Caco-2 (cell line): ENCODE measurements at regions of chr20 and their contacts with region 1.

Region 1: GRCh38 chr20:45293041-45294002 is 13.3 kb upstream of the RBPJL start:
- DNase-seq: peak; percentile 90 to 95
- H3K4me3 ChIP-seq: peak overlapping the region; percentile 63
- H3K4me3 Mint-ChIP-seq: peak overlapping the region; percentile 72
- H3K27ac Mint-ChIP-seq: no peak overlapping the region
- H3K4me1 ChIP-seq: 0 out of 2 replicates have a peak, but pooled peaks cover 3% of the 10 kb centered on the region
- H3K4me1 Mint-ChIP-seq: no peaks in the 10 kb centered on the region
- H3K27me3 ChIP-seq: peaks cover 4% of the 10 kb centered on the region; the same call in 1 of the 2 replicates
- H3K27me3 Mint-ChIP-seq: peaks cover 13% of the 10 kb centered on the region
- CTCF ChIP-seq: peak; percentile 100

Region 2: DNA sequence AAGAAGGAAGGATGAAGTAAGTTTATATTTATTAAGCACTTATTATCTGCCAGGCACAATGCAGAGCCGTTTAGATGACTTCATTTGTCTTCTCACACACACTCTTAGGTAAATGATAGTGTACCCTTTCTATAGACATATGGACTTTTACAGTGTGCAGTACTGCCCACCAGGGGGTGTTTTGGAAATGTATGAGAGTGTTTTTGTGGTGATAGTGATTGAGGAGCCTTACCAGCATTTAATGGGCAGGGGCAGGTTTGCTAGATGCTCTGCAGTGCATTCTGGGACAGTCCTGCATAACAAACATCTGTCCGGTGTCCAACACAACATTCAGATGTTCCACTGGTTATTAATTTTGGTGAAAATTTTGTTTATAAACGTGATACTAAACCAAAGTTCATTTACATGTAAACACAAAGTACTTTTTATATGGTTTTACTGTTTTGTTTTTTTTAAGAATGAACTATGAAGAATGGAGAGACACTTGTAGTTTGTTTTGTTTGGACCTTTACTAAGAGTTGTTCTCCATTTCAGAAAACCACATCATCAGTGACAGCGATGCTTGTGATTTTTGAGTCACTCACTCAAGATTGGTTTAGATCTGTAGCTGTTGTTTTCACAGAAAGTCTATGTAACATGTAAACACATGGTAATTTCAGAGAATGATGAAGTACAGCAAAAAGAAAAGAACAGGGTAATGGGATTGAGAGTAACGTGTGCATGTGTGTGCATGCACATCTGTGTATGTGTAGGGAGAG is 212.3 kb before region 1 on chr20:
- CTCF ChIA-PET with region 1: interaction called, 3 read pairs
- POLR2A ChIA-PET with region 1: no interaction called
- intact Hi-C with region 1: loop called (anchors 5 kb)
- DNase-seq: peak in 1 of 2 experiments; percentile 67
- H3K4me3 ChIP-seq: no peak overlapping the region
- H3K4me3 Mint-ChIP-seq: no peak overlapping the region
- H3K27ac Mint-ChIP-seq: no peak overlapping the region
- H3K4me1 ChIP-seq: peaks cover 12% of the 10 kb centered on the region
- H3K4me1 Mint-ChIP-seq: peaks cover 6% of the 10 kb centered on the region
- H3K27me3 ChIP-seq: no peaks in the 10 kb centered on the region
- H3K27me3 Mint-ChIP-seq: no peaks in the 10 kb centered on the region
- CTCF ChIP-seq: peak; percentile 67 to 75

Region 3: DNA sequence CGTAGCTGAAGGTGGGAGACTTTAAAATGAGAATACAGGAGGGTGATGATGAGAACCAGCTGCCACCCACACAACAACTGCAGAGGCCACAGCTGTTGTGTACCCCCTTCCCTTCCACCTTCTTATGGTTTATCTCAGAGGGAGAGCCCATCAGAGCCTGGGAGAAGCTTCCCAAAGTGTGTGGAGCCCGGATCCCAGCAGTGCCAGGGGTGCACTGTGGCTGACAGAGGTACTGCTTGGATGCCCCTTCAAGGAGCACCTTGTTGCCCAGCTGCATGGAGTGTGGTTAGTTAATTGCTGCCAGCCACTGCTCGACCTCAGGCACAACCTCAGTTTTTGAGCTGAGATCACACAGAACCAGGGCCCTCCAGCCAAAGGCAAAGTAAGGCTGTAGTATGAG is 105.7 kb before region 1 on chr20:
- CTCF ChIA-PET with region 1: interaction called, 3 read pairs
- POLR2A ChIA-PET with region 1: no interaction called
- intact Hi-C with region 1: loop called (anchors 2 kb)
- DNase-seq: no peak
- H3K4me3 ChIP-seq: no peak overlapping the region
- H3K4me3 Mint-ChIP-seq: no peak overlapping the region
- H3K27ac Mint-ChIP-seq: no peak overlapping the region
- H3K4me1 ChIP-seq: no peaks in the 10 kb centered on the region
- H3K4me1 Mint-ChIP-seq: no peaks in the 10 kb centered on the region
- H3K27me3 ChIP-seq: peaks cover 2% of the 10 kb centered on the region
- H3K27me3 Mint-ChIP-seq: peaks cover 6% of the 10 kb centered on the region
- CTCF ChIP-seq: no peak

Region 4: GRCh38 chr20:45218133-45218532 is 75.2 kb before region 1 on chr20:
- CTCF ChIA-PET with region 1: no interaction called
- POLR2A ChIA-PET with region 1: no interaction called
- intact Hi-C with region 1: no loop called
- DNase-seq: no peak
- H3K4me3 ChIP-seq: no peak overlapping the region
- H3K4me3 Mint-ChIP-seq: no peak overlapping the region
- H3K27ac Mint-ChIP-seq: no peak overlapping the region
- H3K4me1 ChIP-seq: 0 out of 2 replicates have a peak, but pooled peaks cover 6% of the 10 kb centered on the region
- H3K4me1 Mint-ChIP-seq: no peaks in the 10 kb centered on the region
- H3K27me3 ChIP-seq: no peaks in the 10 kb centered on the region; the same call in 1 of the 2 replicates
- H3K27me3 Mint-ChIP-seq: peaks cover 36% of the 10 kb centered on the region
- CTCF ChIP-seq: no peak

Region 5: GRCh38 chr20:45311589-45312211 is 18.4 kb after region 1 on chr20:
- CTCF ChIA-PET with region 1: interaction called, 14 read pairs
- POLR2A ChIA-PET with region 1: no interaction called
- intact Hi-C with region 1: no loop called
- DNase-seq: peak; percentile 81 to 84
- H3K4me3 ChIP-seq: no peak overlapping the region
- H3K4me3 Mint-ChIP-seq: no peak overlapping the region
- H3K27ac Mint-ChIP-seq: no peak overlapping the region
- H3K4me1 ChIP-seq: no peaks in the 10 kb centered on the region
- H3K4me1 Mint-ChIP-seq: peaks cover 8% of the 10 kb centered on the region
- H3K27me3 ChIP-seq: no peaks in the 10 kb centered on the region; the same call in 1 of the 2 replicates
- H3K27me3 Mint-ChIP-seq: peaks cover 3% of the 10 kb centered on the region
- CTCF ChIP-seq: peak; percentile 91 to 94

Region 6: GRCh38 chr20:45347936-45348778 is 54.8 kb after region 1 on chr20 and contains the start of gene SDC4:
- CTCF ChIA-PET with region 1: interaction called, 10 read pairs
- POLR2A ChIA-PET with region 1: no interaction called
- intact Hi-C with region 1: no loop called
- DNase-seq: peak; percentile 83 to 94
- H3K4me3 ChIP-seq: peak within 1 kb of the TSS; percentile 88
- H3K4me3 Mint-ChIP-seq: peak within 1 kb of the TSS; percentile 97
- H3K27ac Mint-ChIP-seq: peak within 1 kb of the TSS; percentile 77
- H3K4me1 ChIP-seq: peaks cover 45% of the 10 kb centered on the region
- H3K4me1 Mint-ChIP-seq: peaks cover 47% of the 10 kb centered on the region
- H3K27me3 ChIP-seq: no peaks in the 10 kb centered on the region
- H3K27me3 Mint-ChIP-seq: no peaks in the 10 kb centered on the region
- CTCF ChIP-seq: no peak
- total RNA-seq, gene SDC4: 227 and 242 TPM in 2 replicates